ENCODE measurements at regions of chr22 and their contacts with region 1.

Region 1: DNA sequence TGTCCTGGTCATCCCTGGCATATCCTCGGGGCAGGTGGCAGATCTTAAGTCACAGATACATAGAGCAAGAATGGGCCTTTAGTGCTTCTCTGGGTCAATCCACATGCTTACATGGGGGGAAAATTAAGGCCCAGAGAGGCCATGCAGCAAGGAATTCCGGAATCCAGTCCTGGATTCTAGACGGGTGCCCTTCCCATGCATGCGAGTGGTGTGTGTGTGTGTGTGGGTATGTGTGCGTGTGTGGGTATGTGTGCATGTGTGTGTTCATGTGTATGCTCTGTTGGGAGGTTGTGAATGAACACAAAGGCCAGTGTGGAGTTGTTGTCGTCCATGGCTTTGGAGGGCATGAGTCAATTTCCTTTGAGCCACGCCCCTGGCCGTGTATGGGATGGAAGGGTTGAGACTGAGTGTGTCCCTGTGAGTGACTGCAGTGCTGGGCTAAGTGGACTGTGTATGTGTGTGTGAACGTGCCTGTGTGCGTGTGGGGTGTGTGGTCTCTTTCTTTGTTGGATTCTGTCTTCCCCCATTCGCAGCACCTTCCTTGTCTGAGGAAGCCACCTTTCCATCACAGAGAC is 33.4 kb upstream of the EIF3D start:
- DNase-seq: no peak
- H3K4me3 ChIP-seq: no peak overlapping the region
- H3K27ac ChIP-seq: no peak overlapping the region
- H3K4me1 ChIP-seq: no peaks in the 10 kb centered on the region
- H3K27me3 ChIP-seq: peaks cover 0 to 27% of the 10 kb centered on the region in 2 donors
- CTCF ChIP-seq: no peak
- POLR2A ChIP-seq: no peak

Region 2: GRCh38 chr22:36587289-36588154 is 25.2 kb after region 1 on chr22:
- intact Hi-C with region 1: loop called (anchors 1 kb)
- DNase-seq: no peak
- H3K4me3 ChIP-seq: peak overlapping the region; percentile 7 to 37 (median 11)
- H3K27ac ChIP-seq: no peak overlapping the region
- H3K4me1 ChIP-seq: no peaks in the 10 kb centered on the region
- H3K27me3 ChIP-seq: no peaks in the 10 kb centered on the region
- CTCF ChIP-seq: no peak
- POLR2A ChIP-seq: no peak

Region 3: DNA sequence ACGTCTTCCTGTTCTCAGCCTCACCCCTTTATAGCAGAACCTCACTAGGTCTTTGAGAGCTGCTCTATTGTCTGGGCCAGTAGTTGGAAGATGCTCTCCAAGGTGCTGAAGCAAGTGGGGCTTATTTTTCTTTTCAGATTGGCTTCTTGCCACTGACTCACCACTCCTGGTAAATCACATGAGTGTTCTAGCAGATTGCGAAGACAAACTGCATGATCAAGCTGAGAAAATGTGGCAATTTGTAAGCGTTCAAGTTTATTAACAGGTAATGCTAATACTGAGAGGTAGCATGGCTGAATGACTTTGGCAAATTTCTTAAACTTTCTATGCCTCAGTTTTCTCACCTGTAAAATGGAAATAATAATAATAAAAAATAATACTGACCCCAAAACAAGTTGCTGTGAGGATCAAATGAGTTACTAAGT is 82.0 kb after region 1 on chr22:
- intact Hi-C with region 1: no loop called
- DNase-seq: no peak
- H3K4me3 ChIP-seq: no peak overlapping the region
- H3K27ac ChIP-seq: no peak overlapping the region
- H3K4me1 ChIP-seq: no peaks in the 10 kb centered on the region
- H3K27me3 ChIP-seq: peaks cover 0 to 39% of the 10 kb centered on the region in 2 donors
- CTCF ChIP-seq: no peak
- POLR2A ChIP-seq: no peak

Region 4: DNA sequence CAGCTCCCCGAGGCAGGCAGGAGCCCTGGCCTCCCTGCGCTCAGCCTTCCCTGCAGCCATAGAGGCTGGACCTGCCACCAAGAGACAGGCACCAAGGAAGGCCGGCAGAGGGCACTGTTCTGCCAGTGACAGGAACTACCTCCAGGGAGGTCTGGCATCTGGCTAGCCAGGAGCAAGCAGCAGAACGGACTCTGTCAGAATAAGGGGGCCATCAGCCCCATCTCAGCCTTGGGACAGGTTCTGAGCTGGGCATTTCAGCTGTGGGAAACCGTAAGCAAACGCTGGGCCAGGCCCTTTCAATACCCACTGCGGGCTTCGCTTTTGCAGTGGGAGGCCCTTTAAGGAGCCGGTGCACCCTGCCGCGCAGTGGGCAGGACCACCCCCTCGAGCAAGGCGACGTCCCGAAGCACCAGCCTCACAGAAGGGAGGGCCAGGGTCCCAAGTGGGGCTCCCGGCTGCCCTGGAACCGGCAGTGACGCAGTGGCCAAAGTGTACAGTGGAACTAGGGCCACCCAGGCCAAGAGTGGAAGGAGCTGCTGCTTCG is 195.4 kb after region 1 on chr22:
- intact Hi-C with region 1: no loop called
- DNase-seq: peak; percentile 74 to 77
- H3K4me3 ChIP-seq: no peak overlapping the region
- H3K27ac ChIP-seq: no peak overlapping the region
- H3K4me1 ChIP-seq: no peaks in the 10 kb centered on the region
- H3K27me3 ChIP-seq: peaks cover 0 to 34% of the 10 kb centered on the region in 2 donors
- CTCF ChIP-seq: peak in 2 of 3 donors; percentile 42 to 58
- POLR2A ChIP-seq: no peak

Region 5: GRCh38 chr22:37077884-37078485 is 515.6 kb after region 1 on chr22:
- intact Hi-C with region 1: loop called (anchors 5 kb)
- DNase-seq: no peak
- H3K4me3 ChIP-seq: no peak overlapping the region
- H3K27ac ChIP-seq: no peak overlapping the region
- H3K4me1 ChIP-seq: no peaks in the 10 kb centered on the region
- H3K27me3 ChIP-seq: peaks cover 0 to 19% of the 10 kb centered on the region in 2 donors
- CTCF ChIP-seq: peak; percentile 52 to 65 (median 62)
- POLR2A ChIP-seq: no peak

Measured in breast epithelium (tissue), 4 donors.